ENCODE measurements at regions of chr3 and their contacts with region 1.

Region 1: GRCh38 chr3:50298836-50299637 is at the starts of genes HYAL3 and NAA80:
- DNase-seq: peak; percentile 97 to 100 (median 100)
- H3K4me3 ChIP-seq: peak within 1 kb of the TSS; percentile 55 to 100 (median 78)
- H3K27ac ChIP-seq: peak within 1 kb of the TSS; percentile 76 to 99 (median 94)
- H3K27me3 ChIP-seq: no peaks in the 10 kb centered on the region
- CTCF ChIP-seq: peak in 45 of 56 donors; percentile 16 to 57 (median 38)
- total RNA-seq, gene HYAL3: 3.0 to 14.8 (median 8.4) TPM
- total RNA-seq, gene NAA80: 10.0 to 30.3 (median 19.2) TPM

Region 2: GRCh38 chr3:49992326-49992725 is 306.7 kb before region 1 on chr3:
- intact Hi-C with region 1: no loop called
- DNase-seq: no peak
- H3K4me3 ChIP-seq: no peak overlapping the region
- H3K27ac ChIP-seq: peak overlapping the region in 1 of 59 donors; percentile 30
- H3K27me3 ChIP-seq: no peaks in the 10 kb centered on the region
- CTCF ChIP-seq: no peak

Region 3: DNA sequence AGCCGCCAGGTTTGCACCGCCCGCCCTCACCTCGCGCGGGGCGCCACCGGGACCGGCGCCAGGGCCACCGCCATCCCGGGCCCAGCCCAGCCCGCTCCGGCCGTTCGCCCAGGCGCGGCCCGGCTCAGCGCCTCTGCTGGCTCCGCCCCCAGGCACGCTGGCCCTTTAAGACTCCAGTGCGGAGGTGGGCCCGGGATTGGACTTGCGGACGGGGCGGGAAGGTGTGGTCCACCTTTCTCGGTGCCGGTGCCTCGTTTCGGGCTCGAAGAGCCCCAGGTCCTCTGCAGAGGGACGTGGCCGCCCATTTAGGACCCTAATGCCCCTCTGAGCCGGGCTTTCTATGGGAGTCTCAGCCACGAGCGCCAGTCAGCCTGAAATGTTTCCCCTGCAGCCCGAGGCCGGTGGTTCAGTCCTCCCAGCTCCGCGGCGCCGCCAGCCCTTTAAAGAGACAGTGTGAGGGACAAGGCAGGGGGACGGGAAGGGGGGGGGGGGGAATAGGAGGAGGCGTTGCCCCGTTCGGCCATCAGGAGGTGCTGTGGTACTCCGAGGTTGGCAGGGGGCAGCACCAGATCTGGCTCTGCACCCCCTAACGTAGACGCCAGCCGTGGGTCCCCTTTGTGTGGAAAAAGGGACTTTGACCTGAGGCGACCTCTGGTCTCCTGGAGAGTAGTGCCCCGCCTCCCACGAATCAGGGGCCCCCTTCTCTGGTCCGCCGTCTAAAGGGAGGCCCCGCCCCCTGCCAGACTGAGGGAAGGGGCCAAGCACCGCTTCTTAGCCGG is 22.5 kb after region 1 on chr3:
- intact Hi-C with region 1: loop called (anchors 2 kb)
- DNase-seq: peak; percentile 80 to 92 (median 90)
- H3K4me3 ChIP-seq: peak overlapping the region; percentile 61 to 98 (median 84)
- H3K27ac ChIP-seq: peak overlapping the region; percentile 81 to 100 (median 97)
- H3K27me3 ChIP-seq: no peaks in the 10 kb centered on the region
- CTCF ChIP-seq: peak in 46 of 56 donors; percentile 3 to 61 (median 40)

Region 4: DNA sequence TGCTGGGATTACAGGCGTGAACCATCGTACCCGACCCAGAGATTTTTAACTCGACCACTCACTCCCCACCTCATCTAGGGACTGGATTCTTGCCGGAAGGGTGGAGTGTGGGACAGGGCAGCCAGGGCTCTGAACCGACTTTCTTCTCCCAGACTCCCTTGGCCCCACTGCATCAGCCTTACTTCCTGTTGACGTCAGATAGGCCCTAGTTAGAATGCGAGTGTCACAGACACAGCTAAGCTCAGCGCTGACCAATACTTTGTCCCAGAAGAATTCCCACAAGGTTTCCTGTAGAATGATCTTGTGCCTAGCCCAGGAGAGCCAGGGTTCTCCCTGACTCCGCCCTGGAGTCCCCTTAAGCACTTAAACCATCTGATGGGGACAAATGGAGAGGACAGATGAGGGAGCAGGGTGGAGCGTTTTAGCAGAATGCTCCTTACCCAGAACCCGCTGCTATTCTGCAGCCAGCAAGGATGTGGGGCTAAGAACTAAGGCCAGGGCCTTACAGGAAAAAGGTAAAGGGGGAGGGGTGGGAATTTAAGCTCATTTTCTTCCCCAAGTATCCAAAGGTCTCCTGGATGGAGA is 34.8 kb after region 1 on chr3:
- intact Hi-C with region 1: loop called (anchors 5 kb)
- DNase-seq: no peak
- H3K4me3 ChIP-seq: peak overlapping the region in 11 of 59 donors; percentile 1 to 94 (median 13)
- H3K27ac ChIP-seq: peak overlapping the region in 55 of 59 donors; percentile 9 to 99 (median 76)
- H3K27me3 ChIP-seq: no peaks in the 10 kb centered on the region
- CTCF ChIP-seq: no peak

Measured in dorsolateral prefrontal cortex (tissue), 120 donors.